ENCODE measurements at regions of chr5 and their contacts with region 1.

Region 1: DNA sequence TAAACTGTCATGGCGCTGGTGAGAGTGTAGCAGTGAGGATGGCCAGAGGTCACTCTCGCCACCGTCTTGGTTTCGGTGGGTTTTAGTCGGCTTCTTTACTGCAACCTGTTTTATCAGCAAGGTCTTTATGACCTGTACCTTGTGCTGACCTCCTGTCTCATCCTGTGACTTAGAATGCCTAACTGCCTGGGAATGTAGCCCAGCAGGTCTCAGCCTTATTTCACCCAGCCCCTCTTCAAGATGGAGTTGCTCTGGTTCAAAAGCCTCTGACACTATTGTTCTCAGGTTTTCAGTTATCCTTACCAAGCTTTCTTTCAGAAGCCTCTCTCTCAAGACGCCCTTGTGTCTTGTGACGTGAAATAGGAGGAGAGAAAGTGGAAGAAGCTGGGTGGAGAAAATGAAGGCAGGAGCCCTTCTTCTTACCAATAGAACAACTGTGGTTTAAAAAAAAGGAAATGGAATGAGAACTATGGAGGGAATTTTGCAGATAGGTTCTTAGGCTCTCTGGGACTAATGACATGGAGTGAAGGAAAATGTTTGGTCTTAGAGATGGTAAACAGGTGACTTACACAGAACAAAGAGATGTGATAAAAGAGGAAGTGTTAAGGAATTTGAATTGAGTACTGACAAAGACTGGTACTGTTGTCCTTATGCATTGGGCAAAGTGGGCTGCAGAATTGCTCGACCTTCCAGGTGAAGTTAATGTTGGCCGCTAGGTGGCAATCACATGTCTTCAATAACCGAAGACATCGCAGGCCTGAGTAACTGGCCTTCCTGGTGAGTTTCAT is 133.3 kb upstream of the RAI14 start:
- DNase-seq: peak; percentile 75
- ATAC-seq: peak; percentile 84 to 85

Region 2: DNA sequence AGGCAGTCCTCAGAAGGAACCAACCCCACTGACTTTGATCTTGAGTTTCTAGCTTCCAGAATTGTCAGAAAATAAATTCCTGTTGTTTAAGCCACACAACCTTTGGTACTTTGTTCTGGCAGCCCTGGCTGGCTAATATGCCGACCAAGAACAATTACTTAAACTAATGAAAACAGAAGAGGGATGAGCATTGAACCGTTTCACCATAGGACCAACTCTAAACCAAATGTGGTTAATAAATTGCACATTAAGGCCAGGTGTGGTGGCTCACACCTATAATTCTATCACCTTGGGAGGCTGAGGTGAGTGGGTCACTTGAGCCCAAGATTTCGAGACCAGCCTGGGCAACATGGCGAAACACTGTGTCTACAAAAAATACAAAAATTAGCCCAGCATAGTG is 27.6 kb before region 1 on chr5:
- intact Hi-C with region 1: no loop called
- DNase-seq: no peak
- ATAC-seq: no peak

Region 3: GRCh38 chr5:34898258-34898895 is 375.6 kb after region 1 on chr5:
- intact Hi-C with region 1: loop called (anchors 2 to 10 kb)
- DNase-seq: peak; percentile 61
- ATAC-seq: peak; percentile 68 to 85

Measured in left cardiac atrium (tissue), 4 donors.